ENCODE measurements at regions of chr1 and their contacts with region 1.

Region 1: DNA sequence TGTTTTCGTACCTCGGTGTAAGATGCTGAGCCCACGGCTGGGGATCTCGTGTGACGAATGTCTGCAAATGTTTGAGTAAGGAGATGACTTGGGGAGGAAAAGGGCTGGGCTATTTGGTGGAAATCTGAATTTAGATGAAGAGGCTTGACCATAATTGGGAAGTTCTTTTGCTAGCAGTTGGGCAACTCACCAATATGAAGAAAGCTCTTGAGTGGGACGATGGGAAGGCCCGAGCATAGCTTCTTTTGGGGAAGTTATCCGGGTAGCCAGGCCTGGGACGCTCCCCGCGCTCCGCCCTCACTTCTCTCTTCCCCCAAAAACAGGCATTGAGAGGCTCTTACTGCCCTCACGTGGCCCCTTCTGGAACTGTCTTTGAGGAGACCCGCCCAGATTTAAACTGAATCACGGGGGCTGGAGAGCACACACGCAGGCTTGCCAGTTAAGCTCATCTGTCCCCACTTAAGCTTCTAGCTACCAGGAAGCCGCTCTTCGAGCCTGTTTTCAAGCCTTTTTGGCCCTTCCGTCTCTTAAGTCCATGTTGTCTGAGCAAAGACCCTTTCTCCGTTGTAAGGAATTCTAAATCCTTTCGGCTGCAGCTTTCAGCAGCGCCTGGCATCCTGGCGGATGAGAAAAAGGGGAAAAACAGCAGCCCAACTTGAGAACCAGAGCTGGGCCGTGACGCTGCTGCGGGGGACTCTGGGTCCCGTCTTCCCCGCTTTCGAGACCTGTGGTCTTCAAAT is 93.1 kb downstream of the NID1 start:
- DNase-seq: peak; percentile 74 to 92 (median 84)
- ATAC-seq: peak; percentile 98 to 99 (median 99)
- H3K4me3 ChIP-seq: peak overlapping the region; percentile 8 to 11
- H3K4me3 Mint-ChIP-seq: peak overlapping the region; percentile 63 to 79 (median 73)
- H3K27ac ChIP-seq: peak overlapping the region; percentile 58
- H3K27ac Mint-ChIP-seq: peak overlapping the region; percentile 76 to 96
- H3K4me1 ChIP-seq: peaks cover 0 to 12% of the 10 kb centered on the region in 2 experiments
- H3K4me1 Mint-ChIP-seq: peaks cover 14 to 18% (median 17%) of the 10 kb centered on the region in 3 donors
- H3K27me3 ChIP-seq: no peaks in the 10 kb centered on the region
- H3K27me3 Mint-ChIP-seq: no peaks in the 10 kb centered on the region

Region 2: GRCh38 chr1:235783148-235783776 is 188.5 kb before region 1 on chr1:
- CTCF ChIA-PET with region 1: interaction called in 1 of 2 experiments, 18 read pairs
- POLR2A ChIA-PET with region 1: no interaction called
- DNase-seq: peak in 1 of 35 experiments; percentile 37
- ATAC-seq: no peak
- H3K4me3 ChIP-seq: no peak overlapping the region
- H3K4me3 Mint-ChIP-seq: no peak overlapping the region
- H3K27ac ChIP-seq: no peak overlapping the region
- H3K27ac Mint-ChIP-seq: no peak overlapping the region
- H3K4me1 ChIP-seq: no peaks in the 10 kb centered on the region
- H3K4me1 Mint-ChIP-seq: no peaks in the 10 kb centered on the region
- H3K27me3 ChIP-seq: no peaks in the 10 kb centered on the region
- H3K27me3 Mint-ChIP-seq: no peaks in the 10 kb centered on the region

Region 3: GRCh38 chr1:235838021-235838420 is 133.7 kb before region 1 on chr1:
- CTCF ChIA-PET with region 1: interaction called, 17 to 25 read pairs
- POLR2A ChIA-PET with region 1: no interaction called
- DNase-seq: peak in 1 of 35 experiments; percentile 35
- ATAC-seq: no peak
- H3K4me3 ChIP-seq: no peak overlapping the region
- H3K4me3 Mint-ChIP-seq: no peak overlapping the region
- H3K27ac ChIP-seq: no peak overlapping the region
- H3K27ac Mint-ChIP-seq: no peak overlapping the region
- H3K4me1 ChIP-seq: peaks cover 0 to 7% of the 10 kb centered on the region in 2 experiments
- H3K4me1 Mint-ChIP-seq: peaks cover 22 to 35% (median 30%) of the 10 kb centered on the region in 3 donors
- H3K27me3 ChIP-seq: no peaks in the 10 kb centered on the region
- H3K27me3 Mint-ChIP-seq: no peaks in the 10 kb centered on the region

Region 4: DNA sequence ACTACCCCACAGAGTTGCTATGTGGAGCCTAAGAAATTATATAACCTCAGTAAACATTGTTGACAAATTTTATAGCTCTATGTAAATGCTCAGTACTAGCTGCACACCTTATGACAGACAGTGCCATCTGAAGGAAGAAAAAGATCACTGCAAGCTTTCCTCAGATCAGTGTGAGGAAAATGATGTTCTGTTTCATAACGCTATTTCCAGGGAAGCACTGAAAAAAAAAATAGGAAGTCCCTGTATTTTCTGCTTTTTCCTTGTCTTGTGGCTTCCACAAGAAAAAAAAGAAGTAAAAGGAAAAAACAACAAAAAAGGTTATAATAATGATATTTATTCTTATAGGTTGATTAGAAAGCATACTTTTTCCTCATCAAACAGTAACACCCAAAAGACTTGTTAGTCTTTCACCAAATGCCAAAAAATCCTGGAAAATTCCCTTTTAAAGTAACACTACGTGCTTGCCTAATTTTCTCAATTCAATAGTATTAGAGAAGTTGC is 128.2 kb before region 1 on chr1:
- CTCF ChIA-PET with region 1: interaction called, 17 to 25 read pairs
- POLR2A ChIA-PET with region 1: no interaction called
- DNase-seq: peak in 1 of 35 experiments; percentile 54
- ATAC-seq: peak in 3 of 4 experiments; percentile 48 to 84 (median 54)
- H3K4me3 ChIP-seq: no peak overlapping the region
- H3K4me3 Mint-ChIP-seq: no peak overlapping the region
- H3K27ac ChIP-seq: no peak overlapping the region
- H3K27ac Mint-ChIP-seq: no peak overlapping the region
- H3K4me1 ChIP-seq: peaks cover 10 to 17% of the 10 kb centered on the region in 2 experiments
- H3K4me1 Mint-ChIP-seq: peaks cover 50 to 69% (median 59%) of the 10 kb centered on the region in 3 donors
- H3K27me3 ChIP-seq: no peaks in the 10 kb centered on the region
- H3K27me3 Mint-ChIP-seq: no peaks in the 10 kb centered on the region

Region 5: GRCh38 chr1:235866913-235867845 is 104.6 kb before region 1 on chr1:
- CTCF ChIA-PET with region 1: interaction called, 32 to 44 read pairs
- POLR2A ChIA-PET with region 1: interaction called, 4 to 13 read pairs
- DNase-seq: peak; percentile 90 to 100 (median 97)
- ATAC-seq: peak; percentile 74 to 89 (median 84)
- H3K4me3 ChIP-seq: peak overlapping the region; percentile 82
- H3K4me3 Mint-ChIP-seq: peak overlapping the region; percentile 84 to 99 (median 96)
- H3K27ac ChIP-seq: peak overlapping the region; percentile 98
- H3K27ac Mint-ChIP-seq: peak overlapping the region; percentile 92 to 97
- H3K4me1 ChIP-seq: peaks cover 6 to 46% of the 10 kb centered on the region in 2 experiments
- H3K4me1 Mint-ChIP-seq: peaks cover 47 to 64% (median 60%) of the 10 kb centered on the region in 3 donors
- H3K27me3 ChIP-seq: no peaks in the 10 kb centered on the region
- H3K27me3 Mint-ChIP-seq: no peaks in the 10 kb centered on the region

Region 6: GRCh38 chr1:235999259-235999925 is 27.7 kb after region 1 on chr1:
- CTCF ChIA-PET with region 1: interaction called in 1 of 2 experiments, 22 read pairs
- POLR2A ChIA-PET with region 1: no interaction called
- DNase-seq: peak; percentile 20 to 86 (median 52)
- ATAC-seq: peak; percentile 87 to 94 (median 93)
- H3K4me3 ChIP-seq: peak overlapping the region in 1 of 2 donors; percentile 1
- H3K4me3 Mint-ChIP-seq: peak overlapping the region; percentile 41 to 56 (median 46)
- H3K27ac ChIP-seq: peak overlapping the region; percentile 92
- H3K27ac Mint-ChIP-seq: peak overlapping the region; percentile 90 to 92
- H3K4me1 ChIP-seq: peaks cover 8 to 50% of the 10 kb centered on the region in 2 experiments
- H3K4me1 Mint-ChIP-seq: peaks cover 38 to 68% (median 43%) of the 10 kb centered on the region in 3 donors
- H3K27me3 ChIP-seq: no peaks in the 10 kb centered on the region
- H3K27me3 Mint-ChIP-seq: no peaks in the 10 kb centered on the region

Region 7: GRCh38 chr1:236175642-236176336 is 204.0 kb after region 1 on chr1:
- CTCF ChIA-PET with region 1: no interaction called
- POLR2A ChIA-PET with region 1: no interaction called
- DNase-seq: no peak
- ATAC-seq: no peak
- H3K4me3 ChIP-seq: no peak overlapping the region
- H3K4me3 Mint-ChIP-seq: no peak overlapping the region
- H3K27ac ChIP-seq: no peak overlapping the region
- H3K27ac Mint-ChIP-seq: no peak overlapping the region
- H3K4me1 ChIP-seq: no peaks in the 10 kb centered on the region
- H3K4me1 Mint-ChIP-seq: no peaks in the 10 kb centered on the region
- H3K27me3 ChIP-seq: no peaks in the 10 kb centered on the region
- H3K27me3 Mint-ChIP-seq: no peaks in the 10 kb centered on the region